Activated naive CD4-positive, alpha-beta T cell treated with anti-CD3 and anti-CD28 coated beads for 36 hours (primary cell): ENCODE measurements at regions of chr6 and their contacts with region 1.

Region 1: GRCh38 chr6:13908955-13909381 is 15.8 kb upstream of the RNF182 start:
- DNase-seq: peak; percentile 62
- H3K4me3 Mint-ChIP-seq: no peak overlapping the region
- H3K27ac Mint-ChIP-seq: no peak overlapping the region
- H3K4me1 Mint-ChIP-seq: peaks cover 2% of the 10 kb centered on the region
- H3K27me3 Mint-ChIP-seq: peaks cover 26% of the 10 kb centered on the region

Region 2: GRCh38 chr6:14046476-14047068 is 137.6 kb after region 1 on chr6:
- CTCF ChIA-PET with region 1: interaction called, 16 read pairs
- intact Hi-C with region 1: loop called (anchors 1 kb)
- DNase-seq: peak; percentile 62
- H3K4me3 Mint-ChIP-seq: no peak overlapping the region
- H3K27ac Mint-ChIP-seq: no peak overlapping the region
- H3K4me1 Mint-ChIP-seq: no peaks in the 10 kb centered on the region
- H3K27me3 Mint-ChIP-seq: peaks cover 18% of the 10 kb centered on the region